HEK293 (cell line): ENCODE measurements at regions of chr19 and their contacts with region 1.

Region 1: GRCh38 chr19:50357178-50358100 is 8.0 kb downstream of the NAPSA start:
- H3K4me3 ChIP-seq: peak overlapping the region; percentile 32
- H3K27ac ChIP-seq: no peak overlapping the region
- H3K4me1 ChIP-seq: no peaks in the 10 kb centered on the region
- CTCF ChIP-seq: peak; percentile 73

Region 2: DNA sequence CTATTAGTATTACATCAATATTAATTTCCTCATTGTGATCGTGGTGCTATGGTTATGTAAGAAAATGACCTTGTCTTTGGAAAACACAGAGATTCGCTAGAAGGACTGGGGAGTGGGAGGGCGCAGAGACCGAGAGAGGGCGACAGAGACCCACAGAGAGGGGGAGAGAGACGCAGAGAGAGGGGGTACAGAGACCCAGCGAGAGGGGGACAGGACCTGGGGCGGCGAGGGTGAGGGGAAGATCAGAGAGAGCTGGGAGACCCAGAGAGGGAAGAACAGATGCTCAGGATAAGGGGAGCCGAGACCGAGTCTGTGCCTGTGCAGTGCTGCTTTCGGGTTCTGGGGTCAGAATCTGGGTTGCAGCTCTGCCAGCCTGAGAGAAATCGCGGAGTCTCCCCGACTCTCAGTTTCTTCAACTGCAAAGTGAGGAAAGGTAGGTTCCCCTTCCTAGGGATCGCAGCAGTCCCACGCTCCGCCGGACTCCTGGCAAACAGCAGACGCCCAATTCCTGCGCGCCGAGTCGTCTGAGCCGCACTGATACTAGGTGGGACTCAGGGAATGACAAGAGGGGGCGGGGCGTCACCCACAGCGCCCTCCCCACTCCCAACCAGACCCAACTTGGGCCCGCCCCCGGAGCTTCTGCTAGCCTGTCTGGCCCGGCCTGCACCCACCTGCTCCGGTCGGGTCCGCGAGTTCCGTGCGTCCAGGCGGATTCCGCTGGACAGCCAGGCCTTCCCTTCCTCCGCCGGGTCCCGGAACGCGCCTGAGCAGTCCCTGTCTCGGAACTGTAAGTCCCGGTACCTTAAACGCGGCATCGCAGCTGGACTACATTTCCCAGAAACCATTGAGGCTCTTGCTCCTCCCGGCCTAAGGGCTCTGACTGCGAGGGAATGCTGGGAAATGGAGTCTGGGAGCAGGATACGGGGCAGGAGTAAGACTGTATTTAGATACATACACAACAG is 209.7 kb before region 1 on chr19:
- CTCF ChIA-PET with region 1: interaction called, 10 read pairs
- POLR2A ChIA-PET with region 1: no interaction called
- H3K4me3 ChIP-seq: peak overlapping the region; percentile 69
- H3K27ac ChIP-seq: peak overlapping the region; percentile 67; the same call in 1 of the 2 replicates
- H3K4me1 ChIP-seq: peaks cover 3% of the 10 kb centered on the region; the same call in 1 of the 2 replicates
- CTCF ChIP-seq: peak; percentile 96

Region 3: DNA sequence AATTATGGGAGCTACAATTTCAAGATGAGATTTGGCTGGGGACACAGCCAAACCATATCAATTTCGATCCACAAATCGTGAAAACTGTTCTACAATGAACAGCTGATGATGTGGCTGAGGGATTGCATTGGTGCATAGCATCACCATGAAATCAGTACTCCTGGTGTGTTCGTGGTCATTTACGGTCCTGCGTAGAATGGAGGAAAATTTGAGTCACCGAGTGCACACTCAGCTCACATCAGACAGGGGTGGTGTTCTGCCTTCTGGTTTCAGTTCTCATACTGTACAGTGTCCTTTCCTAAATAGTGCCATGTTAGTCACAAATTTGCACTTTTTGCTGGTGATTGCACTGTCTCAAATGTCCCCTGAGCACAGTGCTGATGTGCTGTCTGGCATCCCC is 114.9 kb before region 1 on chr19:
- CTCF ChIA-PET with region 1: interaction called, 12 read pairs
- POLR2A ChIA-PET with region 1: no interaction called
- H3K4me3 ChIP-seq: no peak overlapping the region
- H3K27ac ChIP-seq: no peak overlapping the region
- H3K4me1 ChIP-seq: no peaks in the 10 kb centered on the region
- CTCF ChIP-seq: no peak

Region 4: DNA sequence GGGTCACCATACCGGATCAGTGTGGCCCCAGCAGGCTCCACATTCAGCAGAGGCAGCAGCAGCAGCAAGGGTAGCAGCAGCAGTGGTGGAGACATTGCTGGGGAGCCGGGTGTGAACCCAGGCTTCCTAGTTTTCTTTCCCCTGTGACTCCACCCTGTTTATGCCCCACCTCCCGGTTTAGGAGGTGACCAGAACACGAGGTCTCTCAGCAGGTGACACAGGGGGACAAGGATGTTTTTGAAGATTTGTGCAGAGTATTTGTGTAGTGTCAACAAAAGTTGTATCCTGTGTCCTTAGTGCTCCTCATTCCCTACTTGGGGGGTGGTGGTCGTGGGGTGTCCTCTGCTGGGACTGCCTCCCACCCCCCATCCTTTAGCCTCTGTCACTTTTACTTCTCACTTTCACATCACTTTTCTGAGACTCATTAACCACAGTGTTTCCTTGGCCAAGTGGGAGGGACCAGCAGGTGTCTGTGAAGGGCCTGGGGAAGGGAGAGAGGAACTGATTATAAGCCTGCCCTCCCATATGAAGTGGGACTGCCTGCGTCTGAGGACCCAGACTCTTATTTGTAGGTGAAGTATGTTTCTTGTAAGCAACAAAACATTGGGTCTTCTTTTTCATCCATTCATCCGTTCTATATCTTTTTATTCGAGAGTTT is 12.6 kb before region 1 on chr19:
- CTCF ChIA-PET with region 1: interaction called, 10 read pairs
- POLR2A ChIA-PET with region 1: no interaction called
- H3K4me3 ChIP-seq: no peak overlapping the region
- H3K27ac ChIP-seq: no peak overlapping the region
- H3K4me1 ChIP-seq: no peaks in the 10 kb centered on the region
- CTCF ChIP-seq: no peak

Region 5: DNA sequence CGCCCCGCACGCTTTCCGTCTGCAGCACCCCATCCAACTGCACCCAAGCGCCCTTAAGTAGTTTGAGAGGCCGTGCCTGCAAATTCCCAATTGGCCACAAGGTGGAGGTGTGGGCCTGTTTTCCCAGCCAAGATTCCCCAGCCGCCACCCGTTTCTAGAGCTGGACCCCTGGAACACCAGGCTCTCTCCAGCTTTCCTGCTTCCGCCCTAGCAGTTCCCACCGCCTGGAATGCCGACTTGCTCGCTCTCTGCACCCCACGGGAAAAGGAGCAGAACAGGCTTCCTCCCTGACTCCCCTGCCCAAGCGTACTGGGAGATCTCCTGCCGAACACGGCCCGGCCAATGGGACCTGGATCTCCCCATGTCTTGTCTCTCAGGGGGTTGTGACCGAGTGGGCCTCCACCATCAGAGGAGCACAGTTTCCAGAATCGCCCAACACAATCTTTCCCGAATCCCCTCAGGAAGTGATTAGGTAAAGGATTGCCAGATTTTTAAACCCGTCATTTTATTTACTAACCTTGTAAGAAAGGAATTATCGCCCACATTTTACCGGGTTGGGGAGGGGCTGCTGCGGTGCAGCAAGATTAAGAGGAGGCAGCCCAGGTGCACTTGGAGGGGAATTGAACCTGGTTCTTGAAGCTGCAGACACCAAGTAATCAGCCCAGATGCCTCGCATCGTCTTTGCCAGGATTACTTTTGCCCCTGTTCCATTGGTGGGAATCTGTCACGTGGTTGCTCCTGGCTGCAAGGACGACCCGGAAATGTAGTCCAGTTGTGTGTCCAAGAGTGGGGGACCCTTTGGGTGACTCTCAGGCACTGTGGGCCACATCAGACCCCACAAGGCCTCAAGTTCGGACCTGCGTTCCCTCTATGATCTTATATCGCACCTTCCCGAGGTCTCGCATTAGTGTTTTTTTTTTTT is 11.5 kb after region 1 on chr19:
- CTCF ChIA-PET with region 1: interaction called, 40 read pairs
- POLR2A ChIA-PET with region 1: interaction called, 6 read pairs
- H3K4me3 ChIP-seq: peak overlapping the region; percentile 41
- H3K27ac ChIP-seq: peak overlapping the region; percentile 48
- H3K4me1 ChIP-seq: no peaks in the 10 kb centered on the region
- CTCF ChIP-seq: peak; percentile 82

Region 6: GRCh38 chr19:50461066-50461875 is 103.8 kb after region 1 on chr19:
- CTCF ChIA-PET with region 1: interaction called, 38 read pairs
- POLR2A ChIA-PET with region 1: interaction called, 4 read pairs
- H3K4me3 ChIP-seq: no peak overlapping the region
- H3K27ac ChIP-seq: no peak overlapping the region
- H3K4me1 ChIP-seq: no peaks in the 10 kb centered on the region
- CTCF ChIP-seq: peak; percentile 87

Region 7: DNA sequence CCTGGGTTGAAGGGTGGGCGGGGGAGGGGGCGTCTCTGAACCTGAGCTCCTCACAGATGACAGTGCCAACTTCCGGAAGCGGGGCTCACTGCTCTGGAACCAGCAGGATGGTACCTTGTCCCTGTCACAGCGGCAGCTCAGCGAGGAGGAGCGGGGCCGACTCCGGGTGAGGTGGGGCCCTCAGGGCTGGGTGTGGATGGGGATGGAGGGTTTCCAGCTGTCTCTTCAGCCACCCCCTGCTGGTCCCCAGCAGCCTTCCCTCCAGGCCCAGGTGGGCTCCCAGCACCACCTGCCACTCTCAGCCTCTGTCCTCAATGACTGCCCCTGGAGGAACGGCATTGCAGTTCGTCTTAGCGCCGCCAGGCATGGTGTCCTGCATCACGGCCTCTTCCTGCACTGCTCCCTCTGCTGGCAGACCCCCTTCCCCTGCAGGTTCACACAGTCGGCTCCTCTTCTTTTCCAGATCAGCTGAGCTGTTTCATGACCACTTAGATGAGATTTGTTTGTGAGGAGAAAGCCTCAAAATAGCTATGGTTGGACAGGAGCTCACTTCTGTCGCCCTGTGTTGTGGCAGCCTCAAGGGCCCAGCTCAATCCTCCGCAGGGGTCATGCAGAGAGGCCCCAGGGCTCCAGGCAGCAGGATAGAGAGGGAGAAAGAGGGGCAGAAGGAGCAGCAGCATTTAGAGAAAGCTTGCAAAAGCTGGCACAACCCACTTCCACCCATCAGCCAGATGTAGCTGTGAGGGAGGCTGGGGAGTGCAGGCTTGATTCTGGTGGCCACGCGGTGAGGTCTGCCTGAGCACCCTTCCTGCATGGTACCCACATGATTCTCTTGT is 121.7 kb after region 1 on chr19:
- CTCF ChIA-PET with region 1: interaction called, 14 read pairs
- POLR2A ChIA-PET with region 1: no interaction called
- H3K4me3 ChIP-seq: no peak overlapping the region
- H3K27ac ChIP-seq: no peak overlapping the region
- H3K4me1 ChIP-seq: peaks cover 7% of the 10 kb centered on the region; the same call in 1 of the 2 replicates
- CTCF ChIP-seq: peak; percentile 96